Pancreas (tissue), 10 donors: ENCODE measurements at regions of chr6 and their contacts with region 1.

Region 1: DNA sequence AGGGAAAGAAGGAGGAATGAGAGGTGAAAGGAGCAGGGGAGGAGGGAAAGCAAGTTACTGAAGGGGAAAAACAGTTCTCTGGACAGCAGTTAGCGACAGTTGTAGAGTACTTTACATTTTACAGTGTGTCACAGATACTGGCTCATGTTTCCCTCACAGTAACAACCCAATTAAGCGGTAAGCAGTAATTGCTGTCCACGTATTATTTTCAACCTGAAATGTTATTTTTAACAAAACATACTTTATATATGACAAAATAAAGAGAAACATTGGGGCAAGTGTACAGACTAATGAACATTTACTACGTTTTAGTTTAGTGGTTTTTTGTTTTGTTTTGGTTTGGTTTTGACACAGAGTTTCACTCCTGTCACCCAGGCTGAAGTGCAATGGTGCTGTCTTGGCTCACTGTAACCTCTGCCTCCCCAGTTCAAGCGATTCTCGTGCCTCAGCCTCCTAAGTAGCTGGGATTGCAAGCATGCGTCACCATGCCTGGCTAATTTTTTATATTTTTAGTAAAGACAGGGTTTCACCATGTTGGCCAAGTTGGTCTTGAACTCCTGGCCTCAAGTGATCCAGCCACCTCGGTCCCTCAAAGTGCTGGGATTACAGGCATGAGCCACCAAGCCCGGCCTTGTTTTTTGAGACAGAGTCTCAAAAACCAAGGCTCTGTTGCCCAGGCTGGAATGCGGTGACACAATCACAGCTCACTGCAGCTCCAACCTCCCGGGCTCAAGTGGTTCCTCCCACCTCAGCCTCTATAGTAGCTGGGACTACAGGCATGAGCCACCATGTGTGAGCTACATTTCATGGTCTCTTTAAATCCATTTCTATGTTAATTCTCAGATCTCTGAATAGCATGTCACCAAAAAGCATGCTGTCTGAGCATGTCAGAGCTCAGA is 22.6 kb upstream of the BTN3A2 start:
- DNase-seq: no peak
- ATAC-seq: peak in 1 of 4 donors; percentile 8
- H3K4me3 ChIP-seq: no peak overlapping the region
- H3K27ac ChIP-seq: no peak overlapping the region
- H3K4me1 ChIP-seq: no peaks in the 10 kb centered on the region
- H3K27me3 ChIP-seq: peaks cover 0 to 28% (median 2%) of the 10 kb centered on the region in 4 donors
- CTCF ChIP-seq: no peak

Region 2: GRCh38 chr6:26204332-26205165 is 137.8 kb before region 1 on chr6:
- intact Hi-C with region 1: no loop called
- DNase-seq: peak; percentile 68 to 91 (median 82)
- ATAC-seq: peak; percentile 79 to 87 (median 83)
- H3K4me3 ChIP-seq: peak overlapping the region; percentile 26 to 53 (median 42)
- H3K27ac ChIP-seq: peak overlapping the region; percentile 60 to 92 (median 84)
- H3K4me1 ChIP-seq: peaks cover 0 to 5% (median 0%) of the 10 kb centered on the region in 3 donors
- H3K27me3 ChIP-seq: peaks cover 0 to 48% (median 8%) of the 10 kb centered on the region in 4 donors
- CTCF ChIP-seq: no peak

Region 3: DNA sequence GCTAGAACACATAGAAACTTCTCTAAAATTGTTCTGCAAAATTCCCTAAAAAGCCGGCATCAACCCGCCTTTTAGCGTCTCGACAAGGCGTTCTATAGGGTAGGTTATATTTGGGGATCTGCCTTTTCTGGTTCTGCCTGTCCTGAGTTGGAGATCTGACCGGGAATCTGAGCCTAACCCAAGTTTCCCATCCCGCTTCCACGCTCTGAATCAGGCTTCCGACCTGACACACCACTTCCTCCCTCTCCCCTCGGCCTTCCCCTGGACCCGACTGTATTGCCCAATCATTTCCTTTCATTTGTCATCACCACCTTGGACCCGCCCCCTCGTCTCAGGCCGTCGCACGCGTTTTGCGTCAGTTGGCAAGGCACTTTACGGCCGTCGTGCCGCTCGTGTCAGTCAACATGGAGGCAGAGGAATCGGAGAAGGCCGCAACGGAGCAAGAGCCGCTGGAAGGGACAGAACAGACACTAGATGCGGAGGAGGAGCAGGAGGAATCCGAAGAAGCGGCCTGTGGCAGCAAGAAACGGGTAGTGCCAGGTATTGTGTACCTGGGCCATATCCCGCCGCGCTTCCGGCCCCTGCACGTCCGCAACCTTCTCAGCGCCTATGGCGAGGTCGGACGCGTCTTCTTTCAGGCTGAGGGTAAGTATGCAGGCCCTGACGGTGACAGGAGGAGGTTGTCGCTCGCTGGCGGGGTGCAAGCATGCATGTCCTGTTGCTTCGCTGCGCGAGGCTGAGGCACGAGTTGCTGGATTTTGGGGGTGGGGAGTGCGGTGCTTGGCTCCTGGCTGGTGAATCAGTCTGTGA is 254.4 kb after region 1 on chr6 and contains the start of gene ABT1:
- intact Hi-C with region 1: loop called in 1 of 3 experiments (anchors 5 kb)
- DNase-seq: peak; percentile 96 to 99 (median 98)
- ATAC-seq: peak; percentile 96 to 99 (median 98)
- H3K4me3 ChIP-seq: peak within 1 kb of the TSS; percentile 88 to 100 (median 94)
- H3K27ac ChIP-seq: peak within 1 kb of the TSS; percentile 64 to 86 (median 78)
- H3K4me1 ChIP-seq: peaks cover 0 to 18% (median 0%) of the 10 kb centered on the region in 3 donors
- H3K27me3 ChIP-seq: peaks cover 0 to 25% (median 3%) of the 10 kb centered on the region in 4 donors
- CTCF ChIP-seq: no peak
- total RNA-seq, gene ABT1: 3.5 to 6.9 (median 5.5) TPM